PC-3 (cell line): ENCODE measurements at regions of chr6 and their contacts with region 1.

Region 1: DNA sequence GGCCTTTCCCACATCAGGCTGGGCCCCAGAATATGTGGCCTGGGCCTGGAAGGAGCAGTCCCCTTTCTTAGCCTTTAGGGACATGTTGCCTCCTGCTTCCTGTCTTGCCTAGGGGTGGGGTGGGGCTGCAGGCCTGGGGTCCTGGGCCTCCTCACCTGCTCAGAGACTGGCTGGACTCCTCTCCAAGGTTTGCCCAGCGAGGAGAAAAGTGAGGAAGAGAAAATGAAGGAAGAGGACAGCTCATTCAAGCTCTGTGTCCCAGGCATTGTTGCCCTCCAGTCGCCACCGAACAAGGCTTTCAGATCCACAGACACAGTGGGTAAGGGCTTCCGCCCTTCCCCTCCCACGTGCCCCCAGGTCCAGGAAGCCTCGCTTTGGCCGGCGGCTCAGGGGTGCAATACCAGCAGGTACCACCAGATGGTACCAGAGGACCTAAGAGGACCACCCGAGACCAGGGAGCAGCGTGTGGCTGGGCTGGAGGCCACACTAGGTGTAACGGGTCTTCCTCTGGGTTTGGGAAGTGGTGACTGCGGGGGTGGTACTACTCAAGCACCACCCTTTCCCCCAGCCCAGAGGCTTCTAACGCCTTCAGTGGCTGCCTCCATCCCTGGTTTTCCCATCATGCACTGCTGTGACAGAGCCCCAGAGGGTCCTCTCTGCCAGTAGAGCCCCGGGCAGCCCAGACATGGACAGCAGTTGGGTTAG is 5.5 kb upstream of the BAK1 start:
- DNase-seq: peak; percentile 89
- ATAC-seq: peak; percentile 29
- H3K4me3 ChIP-seq: no peak overlapping the region
- H3K27ac ChIP-seq: no peak overlapping the region
- H3K4me1 ChIP-seq: peaks cover 19% of the 10 kb centered on the region
- H3K27me3 ChIP-seq: no peaks in the 10 kb centered on the region
- CTCF ChIP-seq: peak; percentile 97

Region 2: DNA sequence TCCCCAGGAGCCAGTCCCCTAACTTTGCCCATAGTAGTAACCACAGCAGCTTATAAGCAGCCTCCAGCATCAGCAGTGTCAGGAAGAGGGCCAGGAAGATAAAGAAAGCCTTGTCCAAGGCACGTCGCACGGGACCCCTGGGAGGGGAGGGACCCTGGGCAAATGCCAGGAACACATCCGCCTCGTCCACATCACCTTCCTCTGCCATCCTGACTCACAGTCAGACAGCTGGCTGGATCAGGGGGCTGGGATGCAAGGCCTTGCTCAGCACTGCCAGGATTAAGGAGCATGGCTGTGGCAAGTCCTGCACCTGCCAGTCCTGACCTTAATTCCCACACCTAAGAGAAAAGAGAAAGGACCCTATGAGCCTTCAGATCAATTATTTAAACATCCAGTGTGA is 256.5 kb before region 1 on chr6:
- CTCF ChIA-PET with region 1: no interaction called
- POLR2A ChIA-PET with region 1: no interaction called
- intact Hi-C with region 1: no loop called
- DNase-seq: peak; percentile 24
- ATAC-seq: peak; percentile 29; the same call in 1 of the 2 replicates
- H3K4me3 ChIP-seq: no peak overlapping the region
- H3K27ac ChIP-seq: no peak overlapping the region
- H3K4me1 ChIP-seq: peaks cover 2% of the 10 kb centered on the region
- H3K27me3 ChIP-seq: no peaks in the 10 kb centered on the region
- CTCF ChIP-seq: no peak

Region 3: GRCh38 chr6:33477864-33478263 is 107.7 kb before region 1 on chr6:
- CTCF ChIA-PET with region 1: no interaction called
- POLR2A ChIA-PET with region 1: no interaction called
- intact Hi-C with region 1: no loop called
- DNase-seq: no peak
- ATAC-seq: no peak
- H3K4me3 ChIP-seq: no peak overlapping the region
- H3K27ac ChIP-seq: no peak overlapping the region
- H3K4me1 ChIP-seq: no peaks in the 10 kb centered on the region
- H3K27me3 ChIP-seq: peaks cover 4% of the 10 kb centered on the region; the same call in 1 of the 2 replicates
- CTCF ChIP-seq: no peak

Region 4: GRCh38 chr6:33599413-33599911 is 13.9 kb after region 1 on chr6:
- CTCF ChIA-PET with region 1: no interaction called
- POLR2A ChIA-PET with region 1: no interaction called
- intact Hi-C with region 1: no loop called
- DNase-seq: peak; percentile 36
- ATAC-seq: peak; percentile 15
- H3K4me3 ChIP-seq: no peak overlapping the region
- H3K27ac ChIP-seq: no peak overlapping the region
- H3K4me1 ChIP-seq: peaks cover 3% of the 10 kb centered on the region; the same call in 1 of the 2 replicates
- H3K27me3 ChIP-seq: no peaks in the 10 kb centered on the region
- CTCF ChIP-seq: no peak

Region 5: DNA sequence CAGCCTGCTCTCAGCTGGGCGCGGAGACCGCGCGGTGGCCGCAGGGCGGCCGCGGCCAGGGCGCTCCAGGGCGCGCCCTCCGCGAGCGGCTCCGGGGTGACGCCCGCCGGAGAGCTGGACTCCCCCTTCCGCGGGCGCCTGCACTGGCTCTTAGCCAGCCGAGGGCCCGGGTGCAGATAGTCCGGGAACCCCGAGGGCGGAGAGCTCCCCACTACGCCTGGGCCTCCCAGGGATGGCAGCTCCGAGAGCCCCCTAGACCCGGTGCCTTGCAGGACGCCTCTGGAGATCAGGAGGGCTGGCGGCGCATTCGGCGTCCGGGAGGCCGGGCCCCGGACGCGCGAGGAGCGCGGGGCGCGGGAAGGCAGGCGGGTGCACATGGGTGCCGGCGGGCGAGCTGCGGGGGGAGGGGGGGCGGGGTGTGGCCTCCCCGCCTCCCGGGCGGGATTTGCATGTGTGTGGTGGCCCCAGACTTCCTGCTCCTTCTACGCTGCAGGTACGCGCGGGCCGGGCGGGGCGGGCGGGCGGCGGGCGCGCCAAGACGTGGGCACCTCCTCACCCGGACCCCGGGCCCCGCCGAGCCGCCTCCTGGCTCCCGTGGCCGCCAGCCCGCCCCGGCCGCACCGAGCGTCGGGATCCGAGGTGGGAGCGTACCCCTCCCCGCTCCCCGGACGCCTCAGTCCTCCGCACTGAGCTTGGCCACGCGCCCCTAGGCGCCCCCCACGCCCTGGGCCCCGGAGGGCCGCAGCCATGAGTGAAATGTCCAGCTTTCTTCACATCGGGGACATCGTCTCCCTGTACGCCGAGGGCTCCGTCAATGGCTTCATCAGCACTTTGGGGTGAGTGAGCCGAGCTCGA is 35.5 kb after region 1 on chr6 and contains the start of gene ITPR3:
- CTCF ChIA-PET with region 1: interaction called, 7 read pairs
- POLR2A ChIA-PET with region 1: interaction called, 3 read pairs
- intact Hi-C with region 1: loop called (anchors 1 kb)
- DNase-seq: peak; percentile 80
- ATAC-seq: peak; percentile 56
- H3K4me3 ChIP-seq: peak within 1 kb of the TSS; percentile 99
- H3K27ac ChIP-seq: peak within 1 kb of the TSS; percentile 69
- H3K4me1 ChIP-seq: peaks cover 29% of the 10 kb centered on the region
- H3K27me3 ChIP-seq: no peaks in the 10 kb centered on the region
- CTCF ChIP-seq: no peak
- total RNA-seq, gene ITPR3: 41.8 and 50.6 TPM in 2 replicates

Region 6: GRCh38 chr6:33633462-33634158 is 48.1 kb after region 1 on chr6:
- CTCF ChIA-PET with region 1: interaction called, 3 read pairs
- POLR2A ChIA-PET with region 1: no interaction called
- intact Hi-C with region 1: loop called (anchors 2 kb)
- DNase-seq: peak; percentile 49
- ATAC-seq: peak; percentile 83
- H3K4me3 ChIP-seq: peak overlapping the region; percentile 64
- H3K27ac ChIP-seq: no peak overlapping the region
- H3K4me1 ChIP-seq: peaks cover 7% of the 10 kb centered on the region
- H3K27me3 ChIP-seq: no peaks in the 10 kb centered on the region
- CTCF ChIP-seq: no peak

Region 7: DNA sequence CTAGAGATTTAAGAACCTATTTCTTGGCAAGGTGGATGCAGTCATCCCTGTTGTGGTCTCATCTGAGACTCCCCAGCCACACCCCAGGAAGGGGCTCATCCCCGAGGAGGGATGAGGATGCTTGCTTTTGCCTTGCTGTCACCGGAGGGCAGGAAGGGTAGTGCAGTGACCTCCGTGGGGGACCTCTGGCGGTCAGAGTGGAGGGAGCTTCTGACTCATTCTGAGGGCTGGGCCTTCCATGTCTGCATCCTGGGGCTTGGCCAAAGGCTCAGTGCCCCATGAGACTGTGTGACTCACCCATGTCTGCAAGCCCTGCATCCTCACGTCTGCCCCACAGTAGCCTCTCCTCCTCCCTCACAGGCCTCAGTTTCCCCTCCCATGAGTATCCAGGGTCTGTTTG is 87.3 kb after region 1 on chr6:
- CTCF ChIA-PET with region 1: interaction called, 10 read pairs
- POLR2A ChIA-PET with region 1: no interaction called
- intact Hi-C with region 1: loop called (anchors 1 kb)
- DNase-seq: peak; percentile 93
- ATAC-seq: peak; percentile 76
- H3K4me3 ChIP-seq: no peak overlapping the region
- H3K27ac ChIP-seq: no peak overlapping the region
- H3K4me1 ChIP-seq: peaks cover 31% of the 10 kb centered on the region
- H3K27me3 ChIP-seq: no peaks in the 10 kb centered on the region
- CTCF ChIP-seq: peak; percentile 69

Region 8: GRCh38 chr6:33700391-33701050 is 115.0 kb after region 1 on chr6:
- CTCF ChIA-PET with region 1: interaction called, 7 read pairs
- POLR2A ChIA-PET with region 1: interaction called, 26 read pairs
- intact Hi-C with region 1: loop called (anchors 1 kb)
- DNase-seq: peak; percentile 78
- ATAC-seq: peak; percentile 61
- H3K4me3 ChIP-seq: no peak overlapping the region
- H3K27ac ChIP-seq: no peak overlapping the region
- H3K4me1 ChIP-seq: peaks cover 23% of the 10 kb centered on the region
- H3K27me3 ChIP-seq: no peaks in the 10 kb centered on the region
- CTCF ChIP-seq: peak; percentile 91

Region 9: GRCh38 chr6:33875141-33875581 is 289.6 kb after region 1 on chr6:
- CTCF ChIA-PET with region 1: no interaction called
- POLR2A ChIA-PET with region 1: no interaction called
- intact Hi-C with region 1: no loop called
- DNase-seq: no peak
- ATAC-seq: no peak
- H3K4me3 ChIP-seq: no peak overlapping the region
- H3K27ac ChIP-seq: no peak overlapping the region
- H3K4me1 ChIP-seq: no peaks in the 10 kb centered on the region
- H3K27me3 ChIP-seq: peaks cover 64% of the 10 kb centered on the region
- CTCF ChIP-seq: no peak